ENCODE measurements at regions of chr16 and their contacts with region 1.

Region 1: GRCh38 chr16:58129097-58129936 is at the start of gene CFAP20:
- DNase-seq: peak; percentile 98
- H3K4me3 Mint-ChIP-seq: peak within 1 kb of the TSS; percentile 96
- H3K27ac Mint-ChIP-seq: peak within 1 kb of the TSS; percentile 91
- H3K4me1 Mint-ChIP-seq: peaks cover 40% of the 10 kb centered on the region
- H3K27me3 Mint-ChIP-seq: no peaks in the 10 kb centered on the region
- total RNA-seq, gene CFAP20: 31.2 to 31.4 TPM

Region 2: DNA sequence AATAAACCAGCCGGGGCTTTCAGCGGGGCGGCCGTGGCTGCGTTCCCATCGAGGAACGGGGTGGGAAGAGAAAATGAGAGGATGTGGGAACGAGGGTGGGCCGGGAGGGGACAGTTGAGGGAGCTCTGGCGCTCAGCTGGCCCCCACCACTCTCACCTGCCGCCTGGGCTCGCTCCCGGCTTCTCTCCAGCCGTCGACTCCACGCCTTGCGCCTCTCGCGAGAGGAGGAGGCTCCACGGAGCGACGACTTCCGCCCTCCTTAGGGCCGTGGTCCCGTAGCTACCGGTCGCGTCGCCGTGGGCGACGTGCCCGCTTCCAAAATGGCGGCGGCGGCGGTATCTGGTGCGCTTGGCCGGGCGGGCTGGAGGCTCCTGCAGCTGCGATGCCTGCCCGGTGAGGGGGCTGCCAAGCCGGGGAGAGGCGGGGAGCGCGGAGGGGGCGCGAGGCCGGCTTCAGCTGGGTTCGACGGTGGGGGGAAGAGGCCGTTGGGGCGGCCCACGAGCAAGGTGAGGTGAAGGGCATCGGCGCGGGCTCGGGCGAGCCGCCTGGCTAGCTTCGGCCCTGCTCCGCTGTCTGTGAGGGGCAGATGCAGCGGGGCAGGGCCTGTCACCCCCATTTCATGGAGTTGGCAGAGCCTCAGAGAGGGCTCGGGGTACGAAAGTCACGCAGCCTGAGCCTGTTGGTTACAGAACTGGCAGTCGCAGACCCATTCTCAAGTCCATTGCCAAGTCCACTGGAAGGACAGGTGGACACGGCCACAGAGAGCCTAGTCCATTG is 681.9 kb before region 1 on chr16 and contains the starts of genes CIAPIN1 and COQ9:
- CTCF ChIA-PET with region 1: no interaction called
- intact Hi-C with region 1: loop called (anchors 5 kb)
- DNase-seq: peak; percentile 96
- H3K4me3 Mint-ChIP-seq: peak within 1 kb of the TSS; percentile 86
- H3K27ac Mint-ChIP-seq: peak within 1 kb of the TSS; percentile 86
- H3K4me1 Mint-ChIP-seq: peaks cover 42% of the 10 kb centered on the region
- H3K27me3 Mint-ChIP-seq: no peaks in the 10 kb centered on the region
- total RNA-seq, gene CIAPIN1: 29.5 to 31.0 TPM
- total RNA-seq, gene COQ9: 30.6 TPM

Region 3: GRCh38 chr16:57816334-57816745 is 313.0 kb before region 1 on chr16:
- CTCF ChIA-PET with region 1: no interaction called
- intact Hi-C with region 1: loop called (anchors 5 kb)
- DNase-seq: peak; percentile 74
- H3K4me3 Mint-ChIP-seq: no peak overlapping the region
- H3K27ac Mint-ChIP-seq: no peak overlapping the region
- H3K4me1 Mint-ChIP-seq: peaks cover 9% of the 10 kb centered on the region
- H3K27me3 Mint-ChIP-seq: peaks cover under 1% of the 10 kb centered on the region

Region 4: GRCh38 chr16:58176608-58177352 is 47.5 kb after region 1 on chr16:
- CTCF ChIA-PET with region 1: no interaction called
- intact Hi-C with region 1: loop called (anchors 1 kb)
- DNase-seq: peak; percentile 11
- H3K4me3 Mint-ChIP-seq: no peak overlapping the region
- H3K27ac Mint-ChIP-seq: peak overlapping the region; percentile 83
- H3K4me1 Mint-ChIP-seq: peaks cover 50% of the 10 kb centered on the region
- H3K27me3 Mint-ChIP-seq: no peaks in the 10 kb centered on the region

Region 5: GRCh38 chr16:58249780-58250478 is 120.6 kb after region 1 on chr16:
- CTCF ChIA-PET with region 1: interaction called, 4 read pairs
- intact Hi-C with region 1: loop called (anchors 1 kb)
- DNase-seq: peak; percentile 82
- H3K4me3 Mint-ChIP-seq: peak overlapping the region; percentile 85
- H3K27ac Mint-ChIP-seq: no peak overlapping the region
- H3K4me1 Mint-ChIP-seq: peaks cover 6% of the 10 kb centered on the region
- H3K27me3 Mint-ChIP-seq: peaks cover under 1% of the 10 kb centered on the region

Region 6: GRCh38 chr16:58515125-58515870 is 386.0 kb after region 1 on chr16 and contains the start of gene SETD6:
- CTCF ChIA-PET with region 1: no interaction called
- intact Hi-C with region 1: loop called (anchors 5 kb)
- DNase-seq: peak; percentile 78
- H3K4me3 Mint-ChIP-seq: peak within 1 kb of the TSS; percentile 88
- H3K27ac Mint-ChIP-seq: peak within 1 kb of the TSS; percentile 74
- H3K4me1 Mint-ChIP-seq: peaks cover 45% of the 10 kb centered on the region
- H3K27me3 Mint-ChIP-seq: no peaks in the 10 kb centered on the region
- total RNA-seq, gene SETD6: 8.1 to 8.5 TPM